Activated CD4-positive, alpha-beta memory T cell treated with anti-CD3 and anti-CD28 coated beads for 36 hours (primary cell): ENCODE measurements at regions of chr9 and their contacts with region 1.

Region 1: GRCh38 chr9:131668439-131669268 is 71.2 kb downstream of the RAPGEF1 start:
- DNase-seq: peak; percentile 86
- H3K4me3 Mint-ChIP-seq: peak overlapping the region; percentile 67
- H3K27ac Mint-ChIP-seq: peak overlapping the region; percentile 99
- H3K4me1 Mint-ChIP-seq: peaks cover 94% of the 10 kb centered on the region
- H3K27me3 Mint-ChIP-seq: no peaks in the 10 kb centered on the region

Region 2: DNA sequence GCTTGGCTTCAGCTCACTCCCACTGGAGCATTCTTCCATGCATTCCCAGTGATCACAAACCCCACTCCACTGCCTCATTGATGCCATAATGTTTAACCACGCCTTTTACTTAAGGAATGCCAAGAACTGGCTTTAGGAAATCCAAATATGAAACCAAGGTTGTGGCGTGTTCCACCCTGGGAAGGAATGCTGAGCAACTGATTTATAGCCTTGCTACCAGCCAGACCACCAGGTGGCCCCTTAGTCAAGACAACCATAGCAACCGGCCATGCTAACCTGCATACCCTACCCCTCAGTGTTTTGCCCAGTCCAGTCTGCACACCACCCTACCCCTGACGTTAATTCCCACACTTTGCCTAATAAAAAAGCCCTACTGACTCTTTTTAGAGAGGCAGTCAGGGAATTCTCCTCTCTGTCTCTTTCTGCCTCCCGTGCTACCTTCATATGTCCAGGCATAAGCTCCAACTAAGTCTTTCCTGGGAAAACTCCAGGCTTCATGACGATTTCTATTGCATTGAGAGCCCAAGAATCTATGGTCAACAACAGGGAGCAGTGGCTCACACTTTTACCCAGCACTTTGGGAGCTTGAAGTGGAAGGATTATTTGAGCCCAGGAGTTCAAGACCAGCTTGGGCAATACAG is 301.8 kb before region 1 on chr9:
- CTCF ChIA-PET with region 1: no interaction called
- POLR2A ChIA-PET with region 1: no interaction called
- intact Hi-C with region 1: loop called (anchors 5 kb)
- DNase-seq: no peak
- H3K4me3 Mint-ChIP-seq: no peak overlapping the region
- H3K27ac Mint-ChIP-seq: no peak overlapping the region
- H3K4me1 Mint-ChIP-seq: peaks cover 1% of the 10 kb centered on the region
- H3K27me3 Mint-ChIP-seq: no peaks in the 10 kb centered on the region

Region 3: GRCh38 chr9:131627648-131628458 is 40.8 kb before region 1 on chr9:
- CTCF ChIA-PET with region 1: no interaction called
- POLR2A ChIA-PET with region 1: interaction called, 11 read pairs
- intact Hi-C with region 1: loop called (anchors 1 kb)
- DNase-seq: peak; percentile 70
- H3K4me3 Mint-ChIP-seq: no peak overlapping the region
- H3K27ac Mint-ChIP-seq: peak overlapping the region; percentile 80
- H3K4me1 Mint-ChIP-seq: peaks cover 49% of the 10 kb centered on the region
- H3K27me3 Mint-ChIP-seq: no peaks in the 10 kb centered on the region

Region 4: GRCh38 chr9:131650254-131650653 is 18.4 kb before region 1 on chr9:
- CTCF ChIA-PET with region 1: interaction called, 4 read pairs
- POLR2A ChIA-PET with region 1: interaction called, 3 read pairs
- intact Hi-C with region 1: loop called (anchors 1 kb)
- DNase-seq: no peak
- H3K4me3 Mint-ChIP-seq: no peak overlapping the region
- H3K27ac Mint-ChIP-seq: no peak overlapping the region
- H3K4me1 Mint-ChIP-seq: peaks cover 62% of the 10 kb centered on the region
- H3K27me3 Mint-ChIP-seq: no peaks in the 10 kb centered on the region

Region 5: DNA sequence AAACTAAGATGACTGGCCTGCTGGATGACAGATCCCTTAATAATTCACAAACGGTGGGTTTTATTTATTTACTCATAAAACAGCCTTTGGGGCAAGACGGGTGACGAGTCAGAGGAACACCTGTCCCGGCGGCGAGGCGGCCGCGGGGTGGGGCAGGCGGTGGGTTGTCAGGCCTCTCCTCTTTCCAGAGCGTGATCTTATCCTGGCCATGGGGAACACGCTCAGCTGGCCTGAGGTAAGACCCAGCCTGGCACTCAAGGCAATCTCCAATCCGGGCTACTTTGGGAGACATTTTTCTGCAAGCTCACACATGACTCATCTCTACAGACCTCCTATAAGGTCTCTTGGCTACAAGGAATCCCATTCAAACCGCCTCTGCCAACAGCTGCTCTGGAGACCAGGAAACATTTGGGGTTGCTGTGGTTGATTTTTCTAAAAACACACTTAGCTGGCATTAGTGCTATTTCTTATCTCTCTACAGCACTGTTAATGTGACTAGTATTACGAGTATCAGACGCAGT is 64.9 kb after region 1 on chr9:
- CTCF ChIA-PET with region 1: interaction called, 19 read pairs
- POLR2A ChIA-PET with region 1: interaction called, 76 read pairs
- intact Hi-C with region 1: loop called (anchors 1 kb)
- DNase-seq: peak; percentile 74
- H3K4me3 Mint-ChIP-seq: peak overlapping the region; percentile 62
- H3K27ac Mint-ChIP-seq: peak overlapping the region; percentile 93
- H3K4me1 Mint-ChIP-seq: peaks cover 86% of the 10 kb centered on the region
- H3K27me3 Mint-ChIP-seq: no peaks in the 10 kb centered on the region